Breast epithelium (tissue), 4 donors: ENCODE measurements at regions of chr1 and their contacts with region 1.

Region 1: DNA sequence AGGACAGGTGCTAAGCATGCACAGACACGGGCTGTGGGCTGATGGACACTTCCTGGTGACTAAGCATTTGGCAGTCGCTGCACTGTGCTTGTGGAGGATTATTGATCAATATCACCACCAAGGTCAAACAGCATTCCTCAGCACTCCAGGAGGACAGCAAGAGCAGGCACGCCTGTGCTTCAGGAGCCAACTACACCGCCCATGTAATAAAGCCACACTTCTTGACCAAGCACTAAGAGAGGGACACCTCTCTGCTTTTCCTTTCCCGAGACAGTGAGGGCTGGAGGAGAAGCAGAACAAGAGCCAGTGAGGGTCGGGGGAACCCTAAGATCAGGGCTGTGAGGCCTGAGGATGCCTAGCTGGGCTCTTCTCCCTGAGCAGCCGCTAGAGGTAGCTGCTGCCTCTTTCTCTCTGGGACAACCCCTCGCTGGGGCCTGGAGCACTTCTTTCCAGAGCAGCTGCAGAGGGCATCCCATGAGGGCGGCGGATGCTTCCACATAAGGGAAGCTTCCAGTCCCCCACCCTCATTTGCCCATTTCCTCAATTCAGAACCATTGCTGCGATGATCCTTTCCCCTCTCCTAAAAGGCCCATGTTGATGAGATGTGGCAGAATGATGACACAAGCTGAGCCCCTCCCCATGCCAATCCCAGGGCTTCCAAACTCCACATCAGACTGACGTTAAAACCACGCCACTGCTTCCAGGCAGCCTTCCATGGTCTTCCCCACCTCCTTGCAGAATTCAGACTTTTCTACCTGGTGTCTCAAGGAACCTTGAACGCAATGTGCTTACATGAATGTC is 19.1 kb downstream of the RAB7B start:
- DNase-seq: peak; percentile 80 to 90
- H3K4me3 ChIP-seq: peak overlapping the region in 1 of 3 donors; percentile 15
- H3K27ac ChIP-seq: peak overlapping the region; percentile 69 to 74
- H3K4me1 ChIP-seq: peaks cover 0 to 10% of the 10 kb centered on the region in 2 donors
- H3K27me3 ChIP-seq: no peaks in the 10 kb centered on the region
- CTCF ChIP-seq: peak in 2 of 3 donors; percentile 65 to 71
- POLR2A ChIP-seq: no peak

Region 2: GRCh38 chr1:206106328-206107167 is 122.4 kb after region 1 on chr1:
- intact Hi-C with region 1: loop called (anchors 5 kb)
- DNase-seq: peak; percentile 72 to 80
- H3K4me3 ChIP-seq: no peak overlapping the region
- H3K27ac ChIP-seq: no peak overlapping the region
- H3K4me1 ChIP-seq: no peaks in the 10 kb centered on the region
- H3K27me3 ChIP-seq: no peaks in the 10 kb centered on the region
- CTCF ChIP-seq: peak; percentile 86 to 87 (median 86)
- POLR2A ChIP-seq: no peak

Region 3: DNA sequence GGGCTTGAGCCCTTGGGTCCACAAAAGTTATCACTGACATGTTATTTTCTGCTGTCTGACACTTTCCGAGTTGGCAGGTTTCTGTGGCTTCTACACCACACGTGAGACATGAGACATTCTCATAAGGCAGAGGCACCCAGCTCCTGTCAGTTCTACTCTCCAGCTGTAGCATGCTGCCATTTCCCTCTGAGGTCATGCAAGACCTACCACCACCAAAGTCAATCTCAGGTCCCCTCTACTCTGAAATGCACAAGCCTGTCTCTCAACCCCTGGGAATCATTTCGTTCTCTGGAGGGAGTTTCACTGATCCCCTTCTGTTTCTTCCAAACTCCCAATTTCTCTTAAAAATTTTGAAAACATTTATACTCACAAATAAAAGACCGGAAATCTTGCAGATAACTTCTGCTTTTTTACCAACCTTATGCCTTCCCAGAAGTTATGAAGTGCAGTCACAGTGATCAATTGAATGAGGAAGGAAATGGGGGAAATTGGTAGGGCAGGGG is 1430.5 kb after region 1 on chr1:
- intact Hi-C with region 1: loop called (anchors 5 kb)
- DNase-seq: no peak
- H3K4me3 ChIP-seq: no peak overlapping the region
- H3K27ac ChIP-seq: no peak overlapping the region
- H3K4me1 ChIP-seq: no peaks in the 10 kb centered on the region
- H3K27me3 ChIP-seq: no peaks in the 10 kb centered on the region
- CTCF ChIP-seq: no peak
- POLR2A ChIP-seq: no peak